Endothelial cell of umbilical vein (primary cell): ENCODE measurements at regions of chr1 and their contacts with region 1.

Region 1: GRCh38 chr1:239040523-239040922 is 345.8 kb upstream of the CHRM3 start:
- DNase-seq: no peak
- H3K4me3 ChIP-seq: no peak overlapping the region
- H3K27ac ChIP-seq: no peak overlapping the region
- H3K4me1 ChIP-seq: no peaks in the 10 kb centered on the region
- H3K27me3 ChIP-seq: no peaks in the 10 kb centered on the region
- CTCF ChIP-seq: no peak
- POLR2A ChIP-seq: no peak

Region 2: DNA sequence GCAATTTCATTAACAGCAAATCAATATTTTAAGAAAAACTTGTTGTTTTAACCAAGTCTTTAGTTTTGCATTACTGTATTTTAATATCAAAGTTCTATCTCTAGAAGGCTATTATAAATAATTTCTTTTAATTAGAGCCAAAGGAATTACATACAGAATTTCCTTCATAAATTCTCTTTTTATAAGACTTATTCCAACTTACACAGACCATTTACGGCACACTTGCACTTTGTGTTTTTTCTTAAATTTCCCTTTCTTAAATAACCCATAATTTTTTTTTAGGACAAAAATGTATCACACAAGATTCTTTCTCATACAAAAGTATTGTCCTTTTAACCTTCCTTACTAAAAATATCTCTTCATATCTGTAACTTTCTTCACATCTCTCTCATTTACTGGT is 112.6 kb before region 1 on chr1:
- CTCF ChIA-PET with region 1: no interaction called
- POLR2A ChIA-PET with region 1: interaction called, 11 read pairs
- dilution Hi-C with region 1: no loop called
- intact Hi-C with region 1: no loop called
- DNase-seq: no peak
- H3K4me3 ChIP-seq: no peak overlapping the region
- H3K27ac ChIP-seq: no peak overlapping the region
- H3K4me1 ChIP-seq: no peaks in the 10 kb centered on the region
- H3K27me3 ChIP-seq: no peaks in the 10 kb centered on the region
- CTCF ChIP-seq: no peak
- POLR2A ChIP-seq: no peak